Activated naive CD4-positive, alpha-beta T cell treated with anti-CD3 and anti-CD28 coated beads for 36 hours (primary cell): ENCODE measurements at regions of chr11 and their contacts with region 1.

Region 1: DNA sequence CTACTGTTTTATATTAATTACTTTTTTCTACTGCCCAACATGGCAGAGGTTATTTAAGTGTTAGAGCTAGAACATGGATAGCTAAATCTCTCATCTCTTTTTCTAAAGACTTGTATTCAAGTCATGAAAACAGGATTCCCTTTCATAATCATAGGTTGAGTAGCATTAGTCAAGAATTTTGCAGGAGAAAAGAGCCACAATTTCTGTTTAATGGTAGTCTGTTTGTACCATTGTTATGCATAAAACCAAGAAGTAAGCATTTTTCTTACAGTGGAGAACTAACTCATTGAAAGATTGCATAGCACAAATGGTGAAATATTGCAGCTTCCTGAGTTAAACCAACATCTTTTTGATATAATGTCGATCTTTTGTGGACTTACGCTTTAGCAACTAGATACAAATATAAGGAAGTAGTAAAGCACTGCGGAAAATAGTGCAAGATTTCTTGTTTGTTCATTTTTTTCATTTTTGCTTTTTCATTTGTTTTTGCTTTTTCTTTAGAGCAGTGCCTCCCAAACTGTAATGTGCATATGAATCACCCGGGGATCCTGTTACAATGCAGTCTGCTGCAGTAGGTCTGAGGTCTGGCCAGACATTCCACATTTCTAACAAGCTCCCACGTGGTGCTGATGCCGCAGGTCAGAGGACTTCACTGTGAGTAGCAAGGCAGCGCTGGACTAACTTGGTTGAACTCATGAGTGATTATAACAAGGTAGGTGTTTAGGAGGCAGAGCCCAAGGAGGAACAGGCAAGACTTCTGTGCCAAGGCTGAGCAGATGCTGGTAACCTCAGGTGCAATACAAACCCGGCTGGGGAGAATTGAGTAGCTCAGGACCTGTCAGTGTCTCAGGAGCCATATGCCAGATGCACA is 4.6 kb downstream of the ETS1 start:
- DNase-seq: peak; percentile 50
- H3K4me3 Mint-ChIP-seq: peak overlapping the region; percentile 69
- H3K27ac Mint-ChIP-seq: peak overlapping the region; percentile 78
- H3K4me1 Mint-ChIP-seq: peaks cover 62% of the 10 kb centered on the region
- H3K27me3 Mint-ChIP-seq: no peaks in the 10 kb centered on the region

Region 2: GRCh38 chr11:128497061-128497775 is 85.5 kb before region 1 on chr11:
- CTCF ChIA-PET with region 1: no interaction called
- intact Hi-C with region 1: no loop called
- DNase-seq: peak; percentile 57
- H3K4me3 Mint-ChIP-seq: peak overlapping the region; percentile 58
- H3K27ac Mint-ChIP-seq: peak overlapping the region; percentile 100
- H3K4me1 Mint-ChIP-seq: peaks cover 95% of the 10 kb centered on the region
- H3K27me3 Mint-ChIP-seq: no peaks in the 10 kb centered on the region

Region 3: GRCh38 chr11:128610721-128611617 is 28.2 kb after region 1 on chr11:
- CTCF ChIA-PET with region 1: interaction called, 3 read pairs
- intact Hi-C with region 1: loop called (anchors 1 kb)
- DNase-seq: peak; percentile 62
- H3K4me3 Mint-ChIP-seq: peak overlapping the region; percentile 56
- H3K27ac Mint-ChIP-seq: peak overlapping the region; percentile 86
- H3K4me1 Mint-ChIP-seq: peaks cover 49% of the 10 kb centered on the region
- H3K27me3 Mint-ChIP-seq: no peaks in the 10 kb centered on the region

Region 4: GRCh38 chr11:128624269-128625175 is 41.8 kb after region 1 on chr11:
- CTCF ChIA-PET with region 1: interaction called, 10 read pairs
- intact Hi-C with region 1: loop called (anchors 1 kb)
- DNase-seq: peak; percentile 79
- H3K4me3 Mint-ChIP-seq: peak overlapping the region; percentile 59
- H3K27ac Mint-ChIP-seq: peak overlapping the region; percentile 89
- H3K4me1 Mint-ChIP-seq: peaks cover 92% of the 10 kb centered on the region
- H3K27me3 Mint-ChIP-seq: no peaks in the 10 kb centered on the region